WTC11 (cell line): ENCODE measurements at regions of chr22 and their contacts with region 1.

Region 1: DNA sequence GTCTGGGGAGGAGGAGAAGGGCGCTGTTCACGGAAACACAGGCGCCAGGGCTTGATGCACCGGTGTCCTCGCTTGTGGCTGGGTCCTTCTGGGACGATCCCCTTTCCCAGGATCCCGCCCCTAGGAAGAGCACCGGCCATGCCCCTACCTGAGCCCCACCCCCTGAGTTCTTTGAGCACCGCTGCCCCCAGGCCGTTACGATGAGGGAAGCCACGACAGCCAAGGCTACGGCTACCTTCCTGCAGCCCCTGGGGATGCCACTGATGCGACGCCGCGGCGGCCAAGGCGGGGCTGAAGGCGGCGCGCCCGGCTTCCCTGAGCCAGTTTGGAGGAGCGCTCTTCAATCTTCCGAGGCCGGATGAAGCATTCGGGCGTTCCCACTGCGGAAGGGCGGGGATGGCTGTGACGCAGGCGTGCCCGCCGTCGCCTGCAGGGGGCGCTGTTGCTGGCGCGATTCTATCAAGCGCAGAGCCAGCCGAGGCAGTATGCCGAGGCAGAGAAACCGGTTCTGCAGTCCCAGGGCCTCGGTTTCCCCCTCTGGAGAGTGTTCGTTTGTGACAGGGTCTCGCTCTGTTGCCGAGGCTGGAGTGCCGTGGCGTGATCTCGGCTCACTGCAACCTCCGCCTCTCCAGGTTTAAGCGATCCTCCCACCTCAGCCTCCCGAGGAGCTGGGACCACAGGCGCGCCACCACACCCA is 9.7 kb upstream of the NEFH start:
- DNase-seq: peak; percentile 95
- ATAC-seq: peak; percentile 90
- H3K4me3 Mint-ChIP-seq: peak overlapping the region; percentile 83
- H3K27ac Mint-ChIP-seq: peak overlapping the region; percentile 87
- H3K4me1 Mint-ChIP-seq: peaks cover 18% of the 10 kb centered on the region
- H3K27me3 Mint-ChIP-seq: peaks cover 35% of the 10 kb centered on the region
- CTCF ChIP-seq: peak; percentile 100

Region 2: DNA sequence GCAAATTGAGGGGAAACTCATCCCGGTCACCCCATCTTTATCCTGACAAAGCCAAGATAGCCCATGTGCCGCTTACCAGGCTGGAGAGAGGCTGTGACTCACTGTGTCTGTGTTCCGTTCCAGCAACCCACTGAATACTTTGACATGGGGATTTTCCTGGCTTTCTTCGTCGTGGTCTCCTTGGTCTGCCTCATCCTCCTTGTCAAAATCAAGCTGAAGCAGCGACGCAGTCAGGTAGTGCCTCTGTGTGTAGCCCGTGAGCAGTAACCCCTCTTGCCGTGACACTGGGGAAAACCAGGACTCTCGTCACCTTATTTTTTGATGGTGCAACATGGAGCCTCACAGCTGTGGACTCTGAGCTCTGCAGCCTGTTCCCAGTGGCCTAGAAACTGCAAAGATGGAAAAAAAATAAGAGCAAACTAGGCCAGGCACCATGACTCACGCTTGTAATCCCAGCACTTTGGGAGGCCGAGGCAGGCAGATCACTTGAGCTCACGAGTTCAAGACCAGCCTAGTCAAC is 425.6 kb before region 1 on chr22:
- CTCF ChIA-PET with region 1: no interaction called
- POLR2A ChIA-PET with region 1: no interaction called
- DNase-seq: no peak
- ATAC-seq: no peak
- H3K4me3 Mint-ChIP-seq: no peak overlapping the region
- H3K27ac Mint-ChIP-seq: no peak overlapping the region
- H3K4me1 Mint-ChIP-seq: peaks cover 3% of the 10 kb centered on the region; the same call in 1 of the 2 replicates
- H3K27me3 Mint-ChIP-seq: no peaks in the 10 kb centered on the region
- CTCF ChIP-seq: no peak

Region 3: GRCh38 chr22:29267858-29268417 is 202.4 kb before region 1 on chr22 and contains the starts of genes EWSR1 and RHBDD3:
- CTCF ChIA-PET with region 1: no interaction called
- POLR2A ChIA-PET with region 1: no interaction called
- DNase-seq: peak; percentile 91
- ATAC-seq: peak; percentile 77
- H3K4me3 Mint-ChIP-seq: peak within 1 kb of the TSS; percentile 85
- H3K27ac Mint-ChIP-seq: peak within 1 kb of the TSS; percentile 96
- H3K4me1 Mint-ChIP-seq: peaks cover 41% of the 10 kb centered on the region
- H3K27me3 Mint-ChIP-seq: peaks cover 4% of the 10 kb centered on the region
- CTCF ChIP-seq: no peak
- total RNA-seq, gene EWSR1: 377 to 400 TPM (median 384 TPM) in 3 replicates
- total RNA-seq, gene RHBDD3: 69.6 to 78.2 TPM (median 77.9 TPM) in 3 replicates

Region 4: DNA sequence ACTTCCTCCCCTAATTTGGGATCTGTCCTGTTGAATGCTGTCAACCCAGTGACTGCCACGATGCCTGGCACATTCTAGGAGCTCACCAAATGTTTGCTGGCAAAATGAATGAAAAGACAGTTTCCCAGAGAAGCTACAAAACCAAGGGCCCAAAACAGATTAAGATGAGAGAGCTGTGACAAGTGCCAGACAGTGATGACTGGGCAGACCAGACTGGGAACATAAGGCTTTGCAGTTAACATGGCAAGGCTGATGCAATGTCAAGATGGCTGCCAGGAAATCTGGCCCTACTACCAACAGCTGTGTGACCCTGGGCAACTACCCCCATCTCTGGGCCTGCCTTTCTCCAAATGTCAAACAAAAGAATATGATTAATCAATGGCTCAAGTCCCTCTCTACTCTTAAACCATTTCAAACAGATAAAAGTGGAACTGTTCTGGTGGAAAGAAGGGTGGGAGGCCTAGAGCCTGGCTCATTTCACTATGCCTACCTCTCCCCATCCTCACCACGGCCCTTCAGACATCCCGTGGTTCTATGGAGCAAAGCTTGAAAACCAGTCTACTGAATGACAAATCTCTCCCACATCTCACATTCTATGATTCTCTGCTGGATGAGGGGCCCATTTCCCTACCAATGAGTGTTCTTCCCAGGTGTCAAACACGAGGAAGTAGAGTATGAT is 94.8 kb before region 1 on chr22:
- CTCF ChIA-PET with region 1: interaction called, 10 read pairs
- POLR2A ChIA-PET with region 1: no interaction called
- DNase-seq: no peak
- ATAC-seq: no peak
- H3K4me3 Mint-ChIP-seq: no peak overlapping the region
- H3K27ac Mint-ChIP-seq: peak overlapping the region; percentile 87
- H3K4me1 Mint-ChIP-seq: peaks cover 13% of the 10 kb centered on the region
- H3K27me3 Mint-ChIP-seq: no peaks in the 10 kb centered on the region
- CTCF ChIP-seq: no peak

Region 5: DNA sequence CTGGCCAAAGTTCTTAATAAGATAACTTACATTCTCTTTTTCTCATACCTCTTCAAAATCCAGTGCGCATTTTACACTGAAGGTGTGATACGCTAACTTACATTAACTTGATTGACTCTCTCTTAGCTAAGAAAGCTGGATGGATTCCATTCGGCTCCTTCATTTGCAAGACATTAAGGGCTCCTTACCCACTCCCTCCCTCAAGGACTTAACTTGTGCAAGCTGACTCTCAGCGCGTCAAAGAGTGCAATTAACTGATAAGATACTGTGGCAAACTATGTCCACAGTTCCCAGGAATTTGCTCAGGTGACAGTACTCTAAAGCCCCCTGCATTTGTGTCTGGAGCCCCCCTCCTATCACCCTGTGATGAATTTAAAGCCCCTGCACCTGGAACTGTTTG is 38.3 kb before region 1 on chr22:
- CTCF ChIA-PET with region 1: interaction called, 15 read pairs
- POLR2A ChIA-PET with region 1: no interaction called
- DNase-seq: no peak
- ATAC-seq: no peak
- H3K4me3 Mint-ChIP-seq: peak overlapping the region; percentile 40
- H3K27ac Mint-ChIP-seq: no peak overlapping the region
- H3K4me1 Mint-ChIP-seq: peaks cover 18% of the 10 kb centered on the region
- H3K27me3 Mint-ChIP-seq: no peaks in the 10 kb centered on the region
- CTCF ChIP-seq: no peak

Region 6: DNA sequence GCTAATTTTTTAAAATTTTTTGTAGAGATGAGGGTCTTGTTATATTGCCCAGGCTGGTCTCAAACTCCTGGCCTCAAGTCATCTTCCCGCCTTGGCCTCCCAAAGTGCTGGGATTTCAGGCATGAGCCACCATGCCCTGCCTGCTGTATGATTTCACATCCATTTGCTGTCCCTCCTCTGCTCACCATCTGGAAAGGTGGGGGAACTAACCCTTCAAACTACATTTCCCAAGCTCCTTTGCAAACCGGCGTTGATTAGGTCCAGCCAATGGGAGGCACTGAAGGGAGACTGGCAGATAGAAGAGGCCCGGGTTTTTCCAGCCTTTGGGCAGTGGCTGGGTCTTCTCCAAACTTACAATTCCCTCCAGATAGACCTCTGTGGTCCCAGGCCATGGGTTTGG is 12.6 kb before region 1 on chr22:
- CTCF ChIA-PET with region 1: interaction called, 17 read pairs
- POLR2A ChIA-PET with region 1: no interaction called
- DNase-seq: peak; percentile 67
- ATAC-seq: peak; percentile 96
- H3K4me3 Mint-ChIP-seq: no peak overlapping the region
- H3K27ac Mint-ChIP-seq: no peak overlapping the region
- H3K4me1 Mint-ChIP-seq: peaks cover 5% of the 10 kb centered on the region; the same call in 1 of the 2 replicates
- H3K27me3 Mint-ChIP-seq: no peaks in the 10 kb centered on the region
- CTCF ChIP-seq: no peak

Region 7: GRCh38 chr22:29480512-29481264 is 10.4 kb after region 1 on chr22:
- CTCF ChIA-PET with region 1: interaction called, 60 read pairs
- POLR2A ChIA-PET with region 1: no interaction called
- DNase-seq: peak; percentile 64
- ATAC-seq: peak; percentile 14
- H3K4me3 Mint-ChIP-seq: peak overlapping the region; percentile 78
- H3K27ac Mint-ChIP-seq: no peak overlapping the region
- H3K4me1 Mint-ChIP-seq: peaks cover 42% of the 10 kb centered on the region
- H3K27me3 Mint-ChIP-seq: peaks cover 66% of the 10 kb centered on the region
- CTCF ChIP-seq: no peak